Left colon (tissue), 2 donors: ENCODE measurements at regions of chr1 and their contacts with region 1.

Region 1: GRCh38 chr1:32122151-32122550 is 14.3 kb downstream of the KPNA6 start:
- DNase-seq: no peak
- ATAC-seq: no peak

Region 2: GRCh38 chr1:31891280-31891679 is 230.9 kb before region 1 on chr1:
- intact Hi-C with region 1: no loop called
- DNase-seq: no peak
- ATAC-seq: no peak

Region 3: GRCh38 chr1:32138943-32139342 is 16.8 kb after region 1 on chr1:
- intact Hi-C with region 1: loop called in 1 of 2 experiments (anchors 2 kb)
- DNase-seq: no peak
- ATAC-seq: peak; percentile 21